ENCODE measurements at regions of chr12 and their contacts with region 1.

Region 1: GRCh38 chr12:1795785-1796514 is 24.4 kb upstream of the LRTM2 start:
- DNase-seq: peak; percentile 81
- ATAC-seq: peak; percentile 97
- H3K4me3 ChIP-seq: peak overlapping the region; percentile 37
- H3K27ac ChIP-seq: no peak overlapping the region; the same call in 1 of the 2 replicates
- H3K4me1 ChIP-seq: peaks cover 4% of the 10 kb centered on the region; the same call in 1 of the 2 replicates
- H3K27me3 ChIP-seq: no peaks in the 10 kb centered on the region; the same call in 1 of the 2 replicates
- CTCF ChIP-seq: peak; percentile 98
- POLR2A ChIP-seq: 0 out of 2 replicates have a peak, but pooled peaks have one; percentile 43
- RAD21 ChIP-seq: peak; percentile 98

Region 2: GRCh38 chr12:1634590-1635191 is 161.3 kb before region 1 on chr12:
- CTCF ChIA-PET with region 1: interaction called, 7 read pairs
- POLR2A ChIA-PET with region 1: no interaction called
- dilution Hi-C with region 1: no loop called
- in situ Hi-C with region 1: no loop called
- intact Hi-C with region 1: loop called (anchors 5 kb)
- DNase-seq: peak; percentile 69
- ATAC-seq: peak; percentile 76
- H3K4me3 ChIP-seq: no peak overlapping the region
- H3K27ac ChIP-seq: no peak overlapping the region
- H3K4me1 ChIP-seq: peaks cover 10% of the 10 kb centered on the region
- H3K27me3 ChIP-seq: no peaks in the 10 kb centered on the region
- CTCF ChIP-seq: peak; percentile 78
- POLR2A ChIP-seq: no peak
- RAD21 ChIP-seq: peak; percentile 67

Region 3: DNA sequence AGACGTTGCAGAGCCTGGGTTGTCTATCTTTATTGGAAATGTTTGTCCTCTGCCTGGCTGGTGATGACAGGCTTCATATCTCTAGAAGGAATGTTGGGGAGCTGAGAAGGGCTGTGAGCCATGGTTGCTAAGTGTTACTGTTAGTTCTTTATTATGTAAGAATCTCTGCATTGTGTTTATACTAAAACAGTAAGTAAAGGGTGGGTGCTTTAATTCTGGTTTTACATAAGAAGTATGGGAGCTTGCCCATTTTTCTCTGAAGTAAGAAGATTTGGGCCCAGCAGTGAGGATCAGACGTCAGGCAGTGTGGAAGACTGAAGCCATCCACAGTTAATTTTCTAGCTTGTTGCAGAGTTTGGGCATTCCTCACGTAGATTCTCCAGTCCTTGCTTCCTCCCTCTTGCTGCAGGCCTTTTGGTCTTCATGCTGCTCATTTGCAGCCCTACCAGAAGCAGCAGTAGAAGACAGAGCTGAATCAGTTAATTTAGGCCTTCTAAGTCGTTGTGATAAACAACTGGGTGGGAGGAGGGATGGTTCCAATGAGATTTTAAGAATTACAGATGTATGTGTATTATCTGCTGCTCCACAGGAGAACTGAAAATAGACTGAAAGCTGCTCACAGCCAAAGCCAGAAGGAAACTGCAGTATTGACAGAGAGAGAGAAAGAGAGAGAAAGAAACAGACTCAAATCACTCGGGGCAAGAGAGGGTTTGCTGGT is 145.5 kb before region 1 on chr12:
- CTCF ChIA-PET with region 1: interaction called, 6 read pairs
- POLR2A ChIA-PET with region 1: no interaction called
- dilution Hi-C with region 1: no loop called
- in situ Hi-C with region 1: no loop called
- intact Hi-C with region 1: loop called (anchors 1 kb)
- DNase-seq: peak; percentile 20
- ATAC-seq: peak; percentile 45; the same call in 1 of the 2 replicates
- H3K4me3 ChIP-seq: no peak overlapping the region
- H3K27ac ChIP-seq: no peak overlapping the region
- H3K4me1 ChIP-seq: peaks cover 4% of the 10 kb centered on the region
- H3K27me3 ChIP-seq: no peaks in the 10 kb centered on the region
- CTCF ChIP-seq: no peak
- POLR2A ChIP-seq: no peak
- RAD21 ChIP-seq: no peak

Region 4: GRCh38 chr12:1939801-1940607 is 144.1 kb after region 1 on chr12:
- CTCF ChIA-PET with region 1: interaction called, 11 read pairs
- POLR2A ChIA-PET with region 1: no interaction called
- dilution Hi-C with region 1: no loop called
- in situ Hi-C with region 1: loop called (anchors 5 kb)
- intact Hi-C with region 1: loop called (anchors 1 kb)
- DNase-seq: peak; percentile 78
- ATAC-seq: peak; percentile 83
- H3K4me3 ChIP-seq: no peak overlapping the region
- H3K27ac ChIP-seq: no peak overlapping the region
- H3K4me1 ChIP-seq: peaks cover 12% of the 10 kb centered on the region
- H3K27me3 ChIP-seq: no peaks in the 10 kb centered on the region
- CTCF ChIP-seq: peak; percentile 97
- POLR2A ChIP-seq: no peak
- RAD21 ChIP-seq: peak; percentile 93

Region 5: DNA sequence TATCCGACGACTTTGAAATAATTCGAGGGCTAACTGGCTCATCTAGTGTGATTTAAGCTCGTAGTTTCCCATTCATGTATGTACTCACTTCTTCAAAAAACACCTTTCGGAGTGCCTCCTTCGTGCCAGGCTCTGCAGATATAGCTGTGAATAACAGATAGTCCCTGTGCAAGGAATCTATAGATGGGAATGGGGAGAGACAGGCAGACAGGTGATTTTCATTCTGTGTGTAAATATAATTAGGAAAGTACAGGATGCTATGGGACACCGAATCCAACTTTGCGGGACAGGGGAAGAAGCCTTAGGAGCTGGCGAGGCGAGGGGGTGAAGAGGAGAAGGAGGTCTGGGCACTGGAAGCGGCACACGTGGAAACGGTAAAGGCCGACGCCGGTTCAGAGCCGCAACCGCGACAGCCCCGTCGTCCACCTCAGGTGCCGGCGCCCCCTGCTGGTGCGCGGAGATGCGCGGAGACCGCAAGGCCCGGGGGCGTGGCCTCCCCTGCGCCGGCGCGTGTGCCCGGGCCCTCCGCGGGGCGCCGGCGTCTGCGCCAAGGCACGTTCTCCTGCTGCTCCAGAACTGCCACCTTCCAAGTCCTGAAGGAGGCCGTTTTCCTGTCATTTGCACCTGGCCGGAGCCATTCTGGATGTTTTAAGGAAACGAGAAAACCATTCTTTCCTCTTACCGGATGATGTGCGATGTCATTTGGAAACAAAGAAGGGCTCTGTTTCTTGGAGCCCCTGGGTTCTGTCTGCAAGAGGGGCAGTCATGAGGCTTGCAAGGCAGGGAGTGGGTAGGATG is 238.9 kb after region 1 on chr12:
- CTCF ChIA-PET with region 1: no interaction called
- POLR2A ChIA-PET with region 1: no interaction called
- dilution Hi-C with region 1: no loop called
- in situ Hi-C with region 1: no loop called
- intact Hi-C with region 1: loop called (anchors 1 kb)
- DNase-seq: peak; percentile 66
- ATAC-seq: peak; percentile 100
- H3K4me3 ChIP-seq: peak overlapping the region; percentile 18
- H3K27ac ChIP-seq: no peak overlapping the region
- H3K4me1 ChIP-seq: no peaks in the 10 kb centered on the region
- H3K27me3 ChIP-seq: peaks cover 38% of the 10 kb centered on the region
- CTCF ChIP-seq: peak; percentile 96
- POLR2A ChIP-seq: 0 out of 2 replicates have a peak, but pooled peaks have one; percentile 37
- RAD21 ChIP-seq: peak; percentile 87

Region 6: GRCh38 chr12:2057041-2057794 is 261.3 kb after region 1 on chr12:
- CTCF ChIA-PET with region 1: no interaction called
- POLR2A ChIA-PET with region 1: no interaction called
- dilution Hi-C with region 1: no loop called
- in situ Hi-C with region 1: no loop called
- intact Hi-C with region 1: loop called (anchors 5 kb)
- DNase-seq: peak; percentile 62
- ATAC-seq: no peak
- H3K4me3 ChIP-seq: no peak overlapping the region
- H3K27ac ChIP-seq: no peak overlapping the region
- H3K4me1 ChIP-seq: peaks cover 5% of the 10 kb centered on the region; the same call in 1 of the 2 replicates
- H3K27me3 ChIP-seq: no peaks in the 10 kb centered on the region; the same call in 1 of the 2 replicates
- CTCF ChIP-seq: peak; percentile 71
- POLR2A ChIP-seq: no peak
- RAD21 ChIP-seq: peak; percentile 91

Region 7: DNA sequence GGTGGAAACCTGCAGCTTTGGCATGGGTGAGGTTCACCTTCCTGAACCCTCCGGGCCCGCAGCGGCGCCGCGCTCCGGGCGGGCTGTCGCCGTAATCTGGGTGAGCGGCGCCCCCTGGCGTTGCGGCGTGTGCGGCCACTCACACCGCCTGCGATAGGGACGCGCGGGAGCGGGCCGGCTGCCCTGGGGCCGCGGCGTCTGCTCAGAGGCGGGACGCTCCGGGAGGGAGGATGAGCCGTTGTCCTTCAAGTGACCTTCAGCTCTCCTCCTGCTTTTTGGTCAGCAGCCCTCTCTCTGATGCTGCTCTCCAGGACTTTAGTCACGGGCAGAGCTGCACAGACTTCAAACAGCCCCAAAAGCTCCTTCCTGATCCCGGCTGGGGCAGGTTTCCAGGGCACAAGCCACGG is 787.1 kb after region 1 on chr12:
- CTCF ChIA-PET with region 1: no interaction called
- POLR2A ChIA-PET with region 1: no interaction called
- dilution Hi-C with region 1: no loop called
- in situ Hi-C with region 1: loop called (anchors 10 kb)
- intact Hi-C with region 1: loop called (anchors 1 kb)
- DNase-seq: peak; percentile 36
- ATAC-seq: peak; percentile 93
- H3K4me3 ChIP-seq: no peak overlapping the region
- H3K27ac ChIP-seq: no peak overlapping the region
- H3K4me1 ChIP-seq: peaks cover 10% of the 10 kb centered on the region
- H3K27me3 ChIP-seq: no peaks in the 10 kb centered on the region
- CTCF ChIP-seq: peak; percentile 90
- POLR2A ChIP-seq: no peak
- RAD21 ChIP-seq: peak; percentile 93

Measured in IMR-90 (cell line).